Activated CD8-positive, alpha-beta T cell treated with anti-CD3 and anti-CD28 coated beads for 36 hours (primary cell): ENCODE measurements at regions of chr12 and their contacts with region 1.

Region 1: GRCh38 chr12:105382771-105383622 is 52.5 kb downstream of the C12orf75 start:
- DNase-seq: peak; percentile 27
- ATAC-seq: peak; percentile 67
- H3K4me3 Mint-ChIP-seq: no peak overlapping the region
- H3K27ac Mint-ChIP-seq: no peak overlapping the region
- H3K4me1 Mint-ChIP-seq: no peaks in the 10 kb centered on the region
- H3K27me3 Mint-ChIP-seq: no peaks in the 10 kb centered on the region
- CTCF ChIP-seq: peak; percentile 88

Region 2: GRCh38 chr12:105279460-105280056 is 103.4 kb before region 1 on chr12:
- CTCF ChIA-PET with region 1: interaction called, 7 read pairs
- POLR2A ChIA-PET with region 1: no interaction called
- intact Hi-C with region 1: loop called (anchors 2 kb)
- DNase-seq: peak; percentile 61
- ATAC-seq: peak; percentile 79
- H3K4me3 Mint-ChIP-seq: no peak overlapping the region
- H3K27ac Mint-ChIP-seq: no peak overlapping the region
- H3K4me1 Mint-ChIP-seq: no peaks in the 10 kb centered on the region
- H3K27me3 Mint-ChIP-seq: no peaks in the 10 kb centered on the region
- CTCF ChIP-seq: peak; percentile 79

Region 3: DNA sequence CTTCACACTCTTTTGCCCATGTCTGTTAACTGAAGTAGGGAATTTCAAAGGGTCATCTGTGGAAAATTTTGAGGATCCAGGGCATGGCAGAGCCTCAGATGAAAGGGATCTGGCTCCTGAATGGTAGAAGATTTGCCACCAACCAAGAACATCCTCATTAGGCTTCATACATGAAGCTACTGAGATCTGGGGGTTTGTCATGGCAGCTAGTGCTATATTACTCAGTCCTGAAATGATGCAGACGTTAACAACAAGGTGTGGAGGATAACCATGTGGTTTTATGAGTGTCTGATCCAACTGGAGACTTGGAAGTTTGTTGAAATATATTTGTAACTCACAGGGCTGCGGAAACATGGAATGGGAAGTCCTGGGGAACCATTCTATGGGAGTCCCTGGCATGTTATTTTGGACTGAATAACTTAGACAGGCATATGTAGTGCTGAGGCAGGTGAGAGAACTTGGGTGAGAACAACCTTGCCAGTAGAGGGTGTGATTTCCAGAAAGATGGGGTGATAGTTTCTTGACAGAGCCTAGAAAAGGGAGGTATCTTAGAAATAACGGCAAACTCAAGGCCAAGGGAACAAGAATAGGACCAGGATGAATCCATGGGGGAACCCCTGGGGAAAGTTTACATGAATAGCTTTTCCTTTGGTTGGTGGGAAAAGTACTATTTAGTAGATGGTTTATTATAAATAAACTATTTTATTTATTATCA is 94.5 kb before region 1 on chr12:
- CTCF ChIA-PET with region 1: interaction called, 10 read pairs
- POLR2A ChIA-PET with region 1: no interaction called
- intact Hi-C with region 1: no loop called
- DNase-seq: no peak
- ATAC-seq: no peak
- H3K4me3 Mint-ChIP-seq: no peak overlapping the region
- H3K27ac Mint-ChIP-seq: no peak overlapping the region
- H3K4me1 Mint-ChIP-seq: no peaks in the 10 kb centered on the region
- H3K27me3 Mint-ChIP-seq: peaks cover 2% of the 10 kb centered on the region
- CTCF ChIP-seq: no peak

Region 4: DNA sequence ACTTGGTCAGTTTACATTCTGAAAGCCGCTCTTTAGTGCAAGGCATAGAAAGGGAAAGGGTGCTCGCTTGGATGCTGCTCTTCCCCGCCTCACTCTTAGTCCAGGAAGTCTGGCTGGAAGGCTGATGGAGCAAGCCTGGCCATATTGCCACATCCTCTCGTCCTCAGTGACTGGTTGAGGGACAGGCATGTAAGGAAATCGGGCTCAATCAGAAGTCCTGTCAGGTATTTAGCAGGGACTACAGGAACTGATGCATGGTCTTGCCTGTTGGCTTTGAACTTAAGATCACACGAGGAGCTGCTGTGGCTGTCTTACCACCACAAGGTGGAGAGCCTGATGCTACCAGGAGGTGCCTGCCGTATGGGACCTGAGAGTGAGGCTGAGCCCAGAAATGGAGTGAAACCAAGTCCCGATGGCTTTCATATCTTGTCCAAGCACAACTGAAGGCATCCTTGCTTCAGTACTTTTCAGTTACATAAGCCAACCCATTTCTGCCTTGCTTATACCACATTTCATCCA is 63.2 kb before region 1 on chr12:
- CTCF ChIA-PET with region 1: interaction called, 16 read pairs
- POLR2A ChIA-PET with region 1: no interaction called
- intact Hi-C with region 1: no loop called
- DNase-seq: peak; percentile 19
- ATAC-seq: no peak
- H3K4me3 Mint-ChIP-seq: no peak overlapping the region
- H3K27ac Mint-ChIP-seq: no peak overlapping the region
- H3K4me1 Mint-ChIP-seq: peaks cover 12% of the 10 kb centered on the region
- H3K27me3 Mint-ChIP-seq: no peaks in the 10 kb centered on the region
- CTCF ChIP-seq: no peak